ENCODE measurements at regions of chr10 and their contacts with region 1.

Region 1: GRCh38 chr10:17865351-17865750 is 56.2 kb downstream of the MRC1 start:
- DNase-seq: no peak
- ATAC-seq: no peak

Region 2: DNA sequence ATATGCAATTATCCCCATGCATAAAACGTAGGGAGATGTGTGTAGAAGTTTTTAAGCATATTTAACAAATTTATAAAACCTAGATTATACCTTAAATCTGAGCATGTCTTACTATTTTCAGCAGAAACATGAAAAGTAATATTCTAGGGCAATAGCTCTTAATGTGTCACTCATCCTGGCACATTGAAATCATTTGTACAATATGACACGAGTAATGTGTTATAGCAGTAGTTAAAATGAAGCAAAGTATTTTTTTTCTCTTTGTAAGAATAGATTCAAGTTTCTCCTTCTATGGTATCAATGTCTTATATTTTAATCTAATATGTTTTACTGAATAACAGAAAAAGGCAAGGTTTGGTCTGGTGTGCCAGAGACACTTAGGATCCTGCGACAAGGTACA is 1675.9 kb after region 1 on chr10:
- intact Hi-C with region 1: loop called (anchors 5 kb)
- DNase-seq: no peak
- ATAC-seq: no peak